Activated CD4-positive, alpha-beta T cell treated with anti-CD3 and anti-CD28 coated beads for 36 hours (primary cell): ENCODE measurements at regions of chr1 and their contacts with region 1.

Region 1: DNA sequence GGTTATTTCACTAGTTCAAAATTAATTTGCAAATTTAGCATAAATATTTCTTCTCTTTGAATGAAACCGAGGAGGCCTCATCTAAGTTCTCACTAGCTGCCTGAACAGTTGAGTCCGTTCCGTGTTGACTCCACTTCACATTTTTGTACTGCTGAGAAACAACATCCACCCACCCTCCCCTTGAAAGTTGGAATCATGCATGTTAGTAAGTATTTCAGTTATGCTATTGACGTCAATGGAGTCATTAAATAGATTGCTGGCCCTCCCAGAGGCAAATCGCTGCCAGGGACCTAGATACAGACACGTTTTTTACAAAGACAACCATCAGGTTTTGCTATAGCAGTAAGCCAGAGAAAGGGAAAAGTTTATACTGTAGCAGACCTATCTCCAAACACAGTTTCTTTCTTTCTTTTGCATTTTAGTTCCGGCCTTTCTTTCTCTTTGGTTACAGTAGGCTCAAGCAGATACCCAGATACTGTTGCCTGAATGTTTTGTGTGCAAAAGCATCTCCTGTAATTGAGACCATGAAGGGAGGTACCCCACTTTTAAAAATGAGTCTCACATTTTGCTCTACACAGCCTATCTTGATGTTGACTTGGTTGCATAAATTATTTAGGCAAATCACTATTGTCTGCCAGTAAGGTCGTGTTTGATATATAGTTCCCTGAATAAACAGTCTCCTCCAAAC is 262.6 kb upstream of the SGIP1 start:
- DNase-seq: peak; percentile 78
- ATAC-seq: peak; percentile 65
- H3K4me3 Mint-ChIP-seq: peak overlapping the region; percentile 47
- H3K27ac Mint-ChIP-seq: peak overlapping the region; percentile 90
- H3K4me1 Mint-ChIP-seq: peaks cover 76% of the 10 kb centered on the region
- H3K27me3 Mint-ChIP-seq: no peaks in the 10 kb centered on the region

Region 2: DNA sequence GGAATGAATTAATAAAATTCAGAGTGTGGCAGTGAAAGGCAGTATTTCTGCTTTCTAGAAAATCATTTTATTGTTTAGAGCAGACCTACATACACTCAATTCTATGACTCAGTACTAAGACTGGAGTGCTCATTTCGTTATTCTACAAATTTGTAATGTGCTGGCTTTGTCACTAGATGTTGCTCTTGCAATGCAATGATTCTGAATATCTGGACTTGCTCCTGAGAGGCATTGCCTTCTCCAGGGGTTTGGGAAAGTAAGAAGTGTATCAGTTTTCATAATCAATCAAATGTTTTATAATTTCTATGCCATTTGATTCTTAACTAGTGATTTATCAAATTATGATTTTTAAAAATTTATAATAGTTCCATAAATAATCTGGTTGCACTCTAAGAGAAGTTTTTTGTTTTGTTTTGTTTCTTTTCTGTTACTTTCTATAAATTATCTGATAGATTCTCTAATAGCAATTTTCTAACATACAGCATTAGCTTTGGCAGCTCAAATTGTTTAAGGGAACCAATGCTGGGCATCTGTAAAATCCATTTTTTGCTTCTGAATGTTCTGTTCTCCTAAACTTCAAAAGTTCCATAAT is 17.9 kb before region 1 on chr1:
- CTCF ChIA-PET with region 1: interaction called, 43 read pairs
- POLR2A ChIA-PET with region 1: interaction called, 8 read pairs
- intact Hi-C with region 1: loop called (anchors 1 to 2 kb)
- DNase-seq: no peak
- ATAC-seq: peak; percentile 81
- H3K4me3 Mint-ChIP-seq: no peak overlapping the region
- H3K27ac Mint-ChIP-seq: no peak overlapping the region
- H3K4me1 Mint-ChIP-seq: peaks cover 49% of the 10 kb centered on the region
- H3K27me3 Mint-ChIP-seq: no peaks in the 10 kb centered on the region

Region 3: DNA sequence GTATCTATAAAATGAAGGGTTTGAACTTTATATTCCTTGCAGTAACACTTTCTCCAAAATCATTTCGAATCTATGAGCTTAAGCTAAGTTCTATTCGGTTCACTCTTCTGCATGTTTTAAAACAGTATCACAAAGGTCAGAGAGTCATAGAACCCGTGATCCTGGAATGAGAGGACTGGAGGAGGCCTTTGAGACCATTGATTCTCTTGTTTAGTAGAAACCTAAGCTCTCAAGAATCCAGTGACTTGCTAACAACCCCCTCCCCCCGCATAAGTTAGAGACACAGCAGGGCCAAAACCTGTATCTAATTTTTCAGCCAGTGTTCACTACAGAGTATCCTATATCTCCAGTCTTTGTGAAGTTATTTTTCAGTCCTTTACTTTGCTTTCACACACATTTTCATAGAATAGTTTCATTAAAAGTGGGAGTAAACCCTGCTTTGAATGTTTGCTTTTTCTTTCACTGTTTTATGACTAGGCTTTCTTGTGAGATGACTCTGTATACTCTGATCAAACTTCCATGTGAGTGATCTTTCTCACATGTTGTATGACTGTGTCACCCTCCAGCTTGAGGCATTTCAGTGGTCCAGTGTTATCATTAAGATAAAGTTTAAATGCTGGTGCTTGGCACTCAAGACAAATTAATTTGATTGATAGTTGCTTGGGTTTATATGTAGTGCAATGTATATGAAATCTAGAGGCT is 12.8 kb before region 1 on chr1:
- CTCF ChIA-PET with region 1: interaction called, 43 read pairs
- POLR2A ChIA-PET with region 1: interaction called, 8 read pairs
- intact Hi-C with region 1: loop called (anchors 1 kb)
- DNase-seq: no peak
- ATAC-seq: peak; percentile 91
- H3K4me3 Mint-ChIP-seq: no peak overlapping the region
- H3K27ac Mint-ChIP-seq: peak overlapping the region; percentile 68
- H3K4me1 Mint-ChIP-seq: peaks cover 90% of the 10 kb centered on the region
- H3K27me3 Mint-ChIP-seq: no peaks in the 10 kb centered on the region

Region 4: GRCh38 chr1:66294692-66295384 is 23.5 kb after region 1 on chr1:
- CTCF ChIA-PET with region 1: interaction called, 10 read pairs
- POLR2A ChIA-PET with region 1: no interaction called
- intact Hi-C with region 1: no loop called
- DNase-seq: peak; percentile 41
- ATAC-seq: peak; percentile 90
- H3K4me3 Mint-ChIP-seq: no peak overlapping the region
- H3K27ac Mint-ChIP-seq: peak overlapping the region; percentile 81
- H3K4me1 Mint-ChIP-seq: peaks cover 52% of the 10 kb centered on the region
- H3K27me3 Mint-ChIP-seq: no peaks in the 10 kb centered on the region